ENCODE measurements at regions of chr9 and their contacts with region 1.

Region 1: GRCh38 chr9:122125158-122125508 is 32.0 kb upstream of the TTLL11 start:
- DNase-seq: peak; percentile 86
- CTCF ChIP-seq: peak; percentile 92

Region 2: GRCh38 chr9:121825031-121825691 is 300.0 kb before region 1 on chr9:
- CTCF ChIA-PET with region 1: no interaction called
- POLR2A ChIA-PET with region 1: no interaction called
- DNase-seq: no peak
- CTCF ChIP-seq: no peak

Region 3: GRCh38 chr9:122107291-122107805 is 17.8 kb before region 1 on chr9:
- CTCF ChIA-PET with region 1: interaction called, 75 read pairs
- POLR2A ChIA-PET with region 1: no interaction called
- DNase-seq: no peak
- CTCF ChIP-seq: no peak

Region 4: DNA sequence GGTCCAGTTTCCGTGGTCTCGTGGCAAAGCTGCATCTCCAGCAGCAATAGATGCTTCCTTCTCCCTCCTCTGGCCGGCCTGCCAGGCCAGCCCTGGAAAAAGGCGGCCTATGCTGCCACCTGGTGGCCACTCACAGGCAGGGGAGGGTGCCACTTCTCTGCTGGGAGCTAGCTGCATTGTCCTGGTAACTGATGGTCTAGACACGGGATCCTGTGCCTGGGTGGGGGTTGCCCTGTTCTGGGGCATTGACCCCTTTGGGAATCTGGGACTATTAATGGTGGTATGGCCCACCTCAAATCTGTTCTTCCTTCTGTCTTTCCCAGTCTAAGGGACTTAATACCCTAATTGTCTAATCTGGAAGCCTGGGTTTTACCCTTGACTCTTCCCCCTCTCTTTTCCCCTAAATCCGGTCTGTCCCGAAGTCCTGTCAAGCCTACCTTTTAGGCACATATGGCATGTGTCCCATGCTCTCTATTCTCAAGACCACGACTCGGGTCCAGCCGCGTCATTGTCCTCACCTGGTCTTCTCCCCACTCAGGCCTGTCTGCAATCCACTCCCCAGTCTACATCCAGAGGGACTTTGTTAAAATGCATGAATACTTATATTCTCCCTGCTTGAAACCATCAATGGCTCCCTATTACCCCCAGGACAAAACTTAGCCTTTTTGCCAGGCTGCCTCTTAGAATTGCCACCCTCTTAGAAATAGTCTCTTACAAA is 225.7 kb after region 1 on chr9:
- CTCF ChIA-PET with region 1: interaction called, 243 read pairs
- POLR2A ChIA-PET with region 1: no interaction called
- DNase-seq: peak; percentile 86
- CTCF ChIP-seq: peak; percentile 99

Region 5: GRCh38 chr9:122356627-122357026 is 231.5 kb after region 1 on chr9:
- CTCF ChIA-PET with region 1: interaction called, 243 read pairs
- POLR2A ChIA-PET with region 1: no interaction called
- DNase-seq: no peak
- CTCF ChIP-seq: peak; percentile 4

Region 6: DNA sequence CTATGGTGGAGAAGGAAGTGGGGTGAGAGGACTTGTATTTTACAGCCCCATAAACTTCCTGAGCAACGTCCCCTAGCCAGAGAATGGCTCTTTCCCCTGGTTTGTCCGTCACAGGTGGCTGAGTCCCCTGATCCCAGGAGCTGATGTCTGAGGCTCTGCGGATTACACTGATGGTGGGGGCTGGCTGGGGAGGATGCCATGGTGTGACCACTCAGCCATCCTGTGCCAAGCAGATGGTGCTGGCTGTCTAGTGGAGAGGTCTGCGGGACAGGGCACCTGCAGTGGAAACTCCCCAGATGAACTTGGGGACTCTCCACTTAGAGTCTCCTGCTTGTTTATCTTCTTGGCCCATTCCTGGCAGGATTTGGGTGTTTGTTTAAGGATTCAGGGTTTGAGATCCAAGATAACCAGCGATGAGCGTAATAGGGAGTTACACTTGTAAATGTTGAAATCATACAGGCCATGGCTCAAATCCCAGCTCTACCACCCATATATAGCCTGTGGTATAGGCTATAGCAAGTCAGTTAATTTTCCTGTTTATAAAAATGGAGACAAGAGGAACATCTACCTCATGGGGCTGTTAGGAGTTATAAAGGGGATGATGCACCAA is 241.0 kb after region 1 on chr9:
- CTCF ChIA-PET with region 1: interaction called, 24 read pairs
- POLR2A ChIA-PET with region 1: no interaction called
- DNase-seq: no peak
- CTCF ChIP-seq: no peak

Region 7: DNA sequence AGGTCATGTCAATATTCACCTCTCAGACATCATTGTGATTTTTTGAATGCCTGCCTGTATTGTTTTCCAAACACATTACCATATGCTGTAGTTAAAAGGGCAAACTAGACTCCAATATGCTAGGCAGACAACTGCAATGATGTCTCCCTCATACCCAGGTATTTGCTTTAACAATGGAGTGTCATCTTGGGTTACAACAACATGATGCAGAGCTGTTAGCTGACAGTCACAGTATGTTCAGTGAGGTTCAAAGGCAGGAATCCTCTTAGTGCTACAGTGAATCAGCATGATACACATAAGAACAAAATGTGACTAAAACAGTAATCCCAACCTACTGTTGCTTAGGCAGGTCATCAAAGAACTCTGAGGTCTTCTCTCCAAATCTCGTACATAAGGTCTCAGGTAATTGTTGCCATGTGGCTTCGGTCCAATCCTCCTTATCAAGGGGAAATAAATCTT is 328.6 kb after region 1 on chr9:
- CTCF ChIA-PET with region 1: interaction called, 10 read pairs
- POLR2A ChIA-PET with region 1: no interaction called
- DNase-seq: no peak
- CTCF ChIP-seq: no peak

Region 8: GRCh38 chr9:122810306-122810946 is 685.3 kb after region 1 on chr9:
- CTCF ChIA-PET with region 1: interaction called, 22 read pairs
- POLR2A ChIA-PET with region 1: no interaction called
- DNase-seq: peak; percentile 82
- CTCF ChIP-seq: peak; percentile 89